AG04450 (cell line): ENCODE measurements at regions of chr7 and their contacts with region 1.

Region 1: GRCh38 chr7:73701357-73701995 is 18.0 kb downstream of the STX1A start:
- DNase-seq: no peak
- H3K4me3 ChIP-seq: no peak overlapping the region
- H3K27ac ChIP-seq: no peak overlapping the region
- H3K27me3 ChIP-seq: no peaks in the 10 kb centered on the region
- CTCF ChIP-seq: peak; percentile 60

Region 2: DNA sequence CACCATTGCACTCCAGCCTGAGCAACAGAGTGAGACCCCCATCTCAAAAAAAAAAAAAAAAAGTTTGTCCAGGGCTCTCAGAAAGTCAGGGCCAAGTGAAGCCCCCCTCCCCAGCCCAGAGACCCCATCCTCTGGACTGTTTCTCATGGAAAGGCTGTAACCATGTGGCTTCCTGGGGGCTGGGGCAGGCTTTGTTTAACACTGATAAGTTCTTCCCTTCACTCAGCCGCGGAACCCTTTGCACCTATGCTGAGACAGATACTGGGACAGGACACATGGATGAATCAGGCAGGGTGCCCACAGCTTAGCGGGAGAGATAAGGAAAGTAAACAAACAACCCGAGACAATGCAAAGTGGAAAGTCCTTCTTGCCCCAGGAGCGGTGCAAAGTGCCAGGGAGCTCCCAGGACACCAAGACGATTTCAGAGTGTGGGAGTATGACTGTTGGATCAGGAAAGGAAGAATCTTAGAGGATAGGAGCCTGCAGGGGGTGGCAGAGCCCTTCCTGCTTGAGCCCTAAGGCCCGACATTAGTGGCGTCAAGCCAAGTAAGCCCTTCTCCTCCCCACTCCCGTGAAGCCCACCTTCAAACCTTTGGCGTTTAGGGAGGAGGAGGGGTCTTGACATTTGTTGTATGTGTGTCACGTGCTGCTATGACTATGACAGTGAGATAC is 88.7 kb before region 1 on chr7:
- CTCF ChIA-PET with region 1: interaction called, 4 read pairs
- POLR2A ChIA-PET with region 1: interaction called, 18 read pairs
- DNase-seq: no peak
- H3K4me3 ChIP-seq: no peak overlapping the region
- H3K27ac ChIP-seq: no peak overlapping the region
- H3K27me3 ChIP-seq: peaks cover 9% of the 10 kb centered on the region
- CTCF ChIP-seq: peak; percentile 28